IMR-90 (cell line): ENCODE measurements at regions of chr1 and their contacts with region 1.

Region 1: DNA sequence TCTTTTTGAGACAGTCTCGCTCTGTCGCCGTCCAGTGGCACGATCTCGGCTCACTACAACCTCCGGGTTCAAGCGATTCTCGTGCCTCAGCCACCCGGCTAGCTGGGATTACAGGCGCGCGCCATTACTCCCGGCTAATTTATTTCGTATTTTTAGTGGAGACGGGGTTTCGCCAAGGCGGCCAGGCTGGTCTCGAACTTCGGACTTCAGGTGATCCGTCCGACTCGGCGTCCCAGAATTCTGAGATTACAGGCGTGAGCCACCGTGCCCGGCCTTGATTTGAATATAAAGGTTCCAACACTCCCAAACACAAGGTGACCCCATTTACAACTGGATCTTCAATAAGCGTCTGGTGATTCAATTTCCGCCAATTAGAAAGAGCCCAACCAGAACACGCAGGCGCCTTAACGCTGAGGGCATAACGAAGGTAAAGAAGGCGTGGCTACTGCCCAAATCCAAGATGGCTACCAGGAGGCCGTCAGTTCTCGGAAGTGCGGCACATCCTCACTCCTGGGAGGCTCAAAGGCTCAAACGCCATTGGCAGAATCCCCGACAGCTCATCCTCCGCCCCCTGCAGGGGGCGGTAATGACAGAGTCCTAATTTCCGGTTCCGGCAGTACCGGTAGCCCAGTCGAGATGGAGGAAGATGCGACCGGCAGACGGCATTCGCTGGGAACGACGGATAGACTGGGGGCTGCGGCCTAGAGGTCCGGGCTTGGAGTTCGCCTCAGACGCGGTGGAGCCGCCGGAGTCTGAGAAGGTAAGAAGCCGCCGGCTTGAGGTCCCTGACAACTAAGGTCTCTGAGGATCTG is at the start of gene SLC25A44:
- DNase-seq: peak; percentile 99
- ATAC-seq: peak; percentile 99
- H3K4me3 ChIP-seq: peak within 1 kb of the TSS; percentile 60
- H3K27ac ChIP-seq: peak within 1 kb of the TSS; percentile 68
- H3K4me1 ChIP-seq: no peaks in the 10 kb centered on the region
- H3K27me3 ChIP-seq: no peaks in the 10 kb centered on the region
- CTCF ChIP-seq: peak; percentile 61
- POLR2A ChIP-seq: peak; percentile 92
- RAD21 ChIP-seq: no peak
- total RNA-seq, gene SLC25A44: 12.7 and 12.8 TPM in 2 replicates

Region 2: GRCh38 chr1:156123356-156124196 is 70.1 kb before region 1 on chr1:
- CTCF ChIA-PET with region 1: no interaction called
- POLR2A ChIA-PET with region 1: interaction called, 18 read pairs
- dilution Hi-C with region 1: no loop called
- in situ Hi-C with region 1: no loop called
- intact Hi-C with region 1: no loop called
- DNase-seq: peak; percentile 98
- ATAC-seq: peak; percentile 36
- H3K4me3 ChIP-seq: no peak overlapping the region
- H3K27ac ChIP-seq: peak overlapping the region; percentile 98
- H3K4me1 ChIP-seq: peaks cover 63% of the 10 kb centered on the region
- H3K27me3 ChIP-seq: no peaks in the 10 kb centered on the region
- CTCF ChIP-seq: peak; percentile 38
- POLR2A ChIP-seq: peak; percentile 61; the same call in 1 of the 2 replicates
- RAD21 ChIP-seq: peak; percentile 8; the same call in 1 of the 2 replicates

Region 3: DNA sequence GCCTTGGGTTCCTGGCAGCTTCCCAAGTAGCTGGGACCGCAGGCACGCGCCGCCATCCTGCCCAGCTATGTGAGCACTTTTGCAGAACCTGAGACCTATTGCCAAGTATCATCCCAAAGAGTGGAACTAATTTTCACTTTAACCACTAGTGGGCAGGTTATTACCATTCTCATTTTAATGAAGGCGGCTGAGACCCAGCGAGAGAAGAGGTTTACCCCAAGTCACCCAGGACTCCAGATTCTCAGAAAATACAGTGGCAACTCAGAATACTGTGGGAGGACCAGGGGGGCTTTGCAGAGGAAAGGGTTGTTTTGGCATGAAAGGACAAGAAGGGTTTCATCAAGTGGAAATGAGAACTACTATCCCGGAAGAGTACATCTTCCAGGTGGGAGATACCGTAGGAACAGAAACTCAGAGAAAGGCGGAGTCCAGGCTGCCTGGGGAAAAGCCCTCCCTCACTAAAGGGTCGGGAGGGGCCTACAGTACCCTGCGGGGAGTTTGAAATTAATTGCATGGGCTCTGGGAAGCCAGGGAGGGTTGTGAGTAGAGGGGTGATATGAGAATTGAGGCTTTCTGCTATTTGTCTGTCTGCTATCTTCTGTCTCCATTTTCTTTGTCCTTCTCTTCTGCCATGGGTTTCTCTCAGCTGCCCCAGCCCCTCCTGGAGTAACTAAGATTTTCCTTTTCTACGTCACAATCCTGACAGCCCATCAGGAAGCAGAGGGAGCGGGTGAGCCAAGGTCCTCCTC is 47.5 kb before region 1 on chr1:
- CTCF ChIA-PET with region 1: interaction called, 3 read pairs
- POLR2A ChIA-PET with region 1: interaction called, 4 read pairs
- dilution Hi-C with region 1: no loop called
- in situ Hi-C with region 1: no loop called
- intact Hi-C with region 1: loop called (anchors 2 kb)
- DNase-seq: peak; percentile 94
- ATAC-seq: peak; percentile 74
- H3K4me3 ChIP-seq: no peak overlapping the region
- H3K27ac ChIP-seq: no peak overlapping the region
- H3K4me1 ChIP-seq: peaks cover 11% of the 10 kb centered on the region; the same call in 1 of the 2 replicates
- H3K27me3 ChIP-seq: peaks cover 14% of the 10 kb centered on the region; the same call in 1 of the 2 replicates
- CTCF ChIP-seq: peak; percentile 78
- POLR2A ChIP-seq: peak; percentile 57; the same call in 1 of the 2 replicates
- RAD21 ChIP-seq: peak; percentile 80

Region 4: GRCh38 chr1:156212833-156213643 is 19.3 kb after region 1 on chr1 and contains the start of gene PMF1:
- CTCF ChIA-PET with region 1: interaction called, 3 read pairs
- POLR2A ChIA-PET with region 1: interaction called, 16 read pairs
- dilution Hi-C with region 1: no loop called
- in situ Hi-C with region 1: no loop called
- intact Hi-C with region 1: no loop called
- DNase-seq: peak; percentile 94
- ATAC-seq: peak; percentile 99
- H3K4me3 ChIP-seq: peak within 1 kb of the TSS; percentile 74
- H3K27ac ChIP-seq: peak within 1 kb of the TSS; percentile 93
- H3K4me1 ChIP-seq: 0 out of 2 replicates have a peak, but pooled peaks cover 2% of the 10 kb centered on the region
- H3K27me3 ChIP-seq: no peaks in the 10 kb centered on the region
- CTCF ChIP-seq: no peak
- POLR2A ChIP-seq: peak; percentile 89
- RAD21 ChIP-seq: no peak
- total RNA-seq, gene PMF1: 54.8 and 62.5 TPM in 2 replicates

Region 5: DNA sequence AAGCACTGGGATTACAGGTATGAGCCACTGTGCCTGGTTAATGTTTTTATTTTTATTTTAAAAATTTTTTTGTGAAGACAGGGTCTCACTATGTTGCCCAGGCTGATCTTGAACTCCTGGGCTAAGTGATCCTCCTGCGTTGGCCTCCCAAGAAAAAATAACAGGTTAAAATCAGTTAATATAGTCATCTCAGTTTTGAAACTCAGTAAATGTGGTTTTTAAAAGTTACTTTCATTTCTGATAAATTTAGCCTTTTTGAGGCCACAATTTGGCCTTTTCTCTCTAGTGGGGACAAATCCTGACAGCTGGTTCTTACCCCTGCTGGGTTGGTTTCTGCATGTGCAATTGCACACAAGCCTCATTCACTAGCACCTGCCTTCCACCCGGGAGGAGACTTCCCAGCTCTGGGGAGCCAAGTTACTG is 32.4 kb after region 1 on chr1:
- CTCF ChIA-PET with region 1: no interaction called
- POLR2A ChIA-PET with region 1: no interaction called
- dilution Hi-C with region 1: no loop called
- in situ Hi-C with region 1: no loop called
- intact Hi-C with region 1: no loop called
- DNase-seq: no peak
- ATAC-seq: no peak
- H3K4me3 ChIP-seq: no peak overlapping the region
- H3K27ac ChIP-seq: no peak overlapping the region
- H3K4me1 ChIP-seq: peaks cover 4% of the 10 kb centered on the region; the same call in 1 of the 2 replicates
- H3K27me3 ChIP-seq: no peaks in the 10 kb centered on the region
- CTCF ChIP-seq: no peak
- POLR2A ChIP-seq: no peak
- RAD21 ChIP-seq: no peak